ENCODE measurements at regions of chr5 and their contacts with region 1.

Region 1: DNA sequence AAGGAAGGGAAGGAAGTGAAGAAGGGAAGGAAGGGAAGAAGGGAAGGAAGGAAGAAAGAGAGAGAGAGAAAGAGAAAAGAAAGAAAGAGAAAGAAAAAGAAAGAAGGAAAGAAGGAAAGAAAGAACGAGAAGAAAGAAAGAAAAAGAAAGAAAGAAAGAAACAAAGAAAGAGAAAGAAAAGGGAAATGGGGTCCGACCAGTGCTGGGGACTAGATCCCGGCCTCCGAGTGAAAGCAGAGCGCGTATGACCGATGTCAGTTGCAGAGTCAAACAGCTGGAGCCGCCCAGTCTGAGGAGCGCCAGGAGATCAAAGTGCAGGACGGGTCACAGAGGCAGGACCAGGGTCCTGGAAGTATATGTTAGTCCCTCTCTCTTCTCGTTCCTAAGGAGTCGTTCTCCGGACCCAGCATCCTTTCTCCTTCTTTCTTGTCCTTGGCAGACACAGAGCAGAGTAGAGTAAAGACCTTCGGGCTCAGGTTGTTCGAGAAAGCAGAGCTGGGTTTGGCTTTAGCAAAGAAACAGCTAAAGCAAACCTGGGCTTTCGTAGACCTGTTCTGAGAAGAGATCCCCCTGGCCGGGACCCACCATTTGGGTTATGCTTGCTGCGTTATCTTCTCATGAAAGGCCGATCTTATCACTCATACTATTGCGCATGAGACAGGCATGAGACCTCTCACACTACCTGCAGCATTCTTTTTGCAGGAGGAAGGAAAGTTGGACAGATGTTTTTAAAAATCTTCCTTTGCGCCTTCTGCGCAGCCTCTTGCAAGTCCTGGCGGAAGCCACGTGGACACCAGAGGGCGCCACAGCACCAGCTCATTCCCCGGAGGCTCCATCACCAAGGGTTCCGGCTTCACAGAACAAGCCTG is 305.2 kb upstream of the MSX2 start:
- DNase-seq: peak in 1 of 2 donors; percentile 80
- H3K4me3 ChIP-seq: no peak overlapping the region
- H3K27ac ChIP-seq: no peak overlapping the region
- H3K4me1 ChIP-seq: peaks cover 8% of the 10 kb centered on the region
- H3K27me3 ChIP-seq: no peaks in the 10 kb centered on the region
- CTCF ChIP-seq: peak; percentile 31 to 72 (median 71)
- POLR2A ChIP-seq: no peak

Region 2: GRCh38 chr5:174222891-174223290 is 196.3 kb before region 1 on chr5:
- intact Hi-C with region 1: no loop called
- DNase-seq: no peak
- H3K4me3 ChIP-seq: no peak overlapping the region
- H3K27ac ChIP-seq: no peak overlapping the region
- H3K4me1 ChIP-seq: no peaks in the 10 kb centered on the region
- H3K27me3 ChIP-seq: no peaks in the 10 kb centered on the region
- CTCF ChIP-seq: no peak
- POLR2A ChIP-seq: no peak

Region 3: GRCh38 chr5:174793684-174794328 is 374.6 kb after region 1 on chr5:
- intact Hi-C with region 1: loop called (anchors 5 kb)
- DNase-seq: no peak
- H3K4me3 ChIP-seq: no peak overlapping the region
- H3K27ac ChIP-seq: no peak overlapping the region
- H3K4me1 ChIP-seq: no peaks in the 10 kb centered on the region
- H3K27me3 ChIP-seq: no peaks in the 10 kb centered on the region
- CTCF ChIP-seq: peak; percentile 16 to 76 (median 52)
- POLR2A ChIP-seq: no peak